ENCODE measurements at regions of chr5 and their contacts with region 1.

Region 1: DNA sequence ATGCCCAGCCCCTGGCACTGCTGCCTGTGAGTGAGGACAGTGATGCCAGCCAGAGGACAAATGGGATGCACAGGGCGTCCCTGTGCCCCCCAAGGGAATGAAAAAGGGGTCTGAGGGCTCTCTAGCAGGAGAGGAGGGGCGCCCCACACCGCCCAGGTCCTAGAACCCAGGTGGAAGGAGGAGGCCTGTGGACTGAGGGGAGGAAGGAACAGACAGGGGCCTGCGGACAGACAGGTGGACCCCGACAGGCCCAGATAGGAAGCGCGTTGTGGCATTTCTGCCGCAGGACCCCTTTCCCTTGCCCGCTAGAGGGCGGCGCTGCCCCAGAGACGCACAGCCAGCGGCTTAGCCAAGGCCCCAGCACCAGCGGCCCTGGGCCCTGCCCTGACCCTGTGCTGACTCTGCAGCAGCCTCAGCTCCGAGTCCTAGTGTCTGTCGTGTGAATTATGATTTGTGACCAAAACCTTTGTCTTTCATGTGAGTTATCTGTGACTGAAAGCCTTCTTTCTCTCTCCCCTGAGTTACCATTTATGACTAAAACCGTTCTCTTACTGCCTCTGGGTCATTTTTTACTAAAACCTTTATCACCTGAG is 30.7 kb downstream of the TRIP13 start:
- DNase-seq: peak; percentile 50 to 84 (median 68)
- ATAC-seq: peak; percentile 86
- H3K4me3 ChIP-seq: no peak overlapping the region
- H3K4me3 Mint-ChIP-seq: no peak overlapping the region
- H3K27ac ChIP-seq: no peak overlapping the region
- H3K27ac Mint-ChIP-seq: no peak overlapping the region
- H3K4me1 ChIP-seq: no peaks in the 10 kb centered on the region
- H3K4me1 Mint-ChIP-seq: peaks cover 10% of the 10 kb centered on the region
- H3K27me3 ChIP-seq: peaks cover 8 to 10% of the 10 kb centered on the region in 2 experiments
- H3K27me3 Mint-ChIP-seq: peaks cover 23% of the 10 kb centered on the region
- CTCF ChIP-seq: peak; percentile 69

Region 2: GRCh38 chr5:572398-573019 is 350.9 kb before region 1 on chr5:
- CTCF ChIA-PET with region 1: no interaction called
- POLR2A ChIA-PET with region 1: no interaction called
- intact Hi-C with region 1: no loop called
- DNase-seq: peak in 1 of 9 experiments; percentile 7
- ATAC-seq: no peak
- H3K4me3 ChIP-seq: no peak overlapping the region
- H3K4me3 Mint-ChIP-seq: no peak overlapping the region
- H3K27ac ChIP-seq: no peak overlapping the region
- H3K27ac Mint-ChIP-seq: no peak overlapping the region
- H3K4me1 ChIP-seq: no peaks in the 10 kb centered on the region
- H3K4me1 Mint-ChIP-seq: no peaks in the 10 kb centered on the region
- H3K27me3 ChIP-seq: peaks cover 0 to 3% of the 10 kb centered on the region in 2 experiments
- H3K27me3 Mint-ChIP-seq: peaks cover 30% of the 10 kb centered on the region
- CTCF ChIP-seq: no peak

Region 3: DNA sequence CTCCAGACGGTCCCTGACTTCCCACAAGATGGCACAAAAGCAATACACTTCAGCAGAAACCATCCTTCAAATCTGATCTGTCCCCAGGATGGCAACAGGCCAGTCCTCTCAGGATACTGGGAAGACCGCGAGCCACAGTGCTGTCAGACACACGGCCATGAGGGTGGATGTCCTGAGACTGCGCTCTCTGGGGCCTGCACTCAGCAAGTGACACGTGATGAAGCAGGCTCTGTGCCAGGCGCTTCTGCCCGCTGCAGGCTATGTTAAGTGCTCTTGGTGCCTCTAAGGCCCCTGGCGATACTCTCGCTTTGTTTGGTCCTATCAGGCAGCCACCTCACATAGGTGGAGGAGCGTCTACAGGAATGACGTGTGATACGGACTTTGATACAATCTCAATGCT is 37.8 kb before region 1 on chr5:
- CTCF ChIA-PET with region 1: no interaction called
- POLR2A ChIA-PET with region 1: no interaction called
- intact Hi-C with region 1: no loop called
- DNase-seq: no peak
- ATAC-seq: no peak
- H3K4me3 ChIP-seq: no peak overlapping the region
- H3K4me3 Mint-ChIP-seq: no peak overlapping the region
- H3K27ac ChIP-seq: no peak overlapping the region
- H3K27ac Mint-ChIP-seq: no peak overlapping the region
- H3K4me1 ChIP-seq: peaks cover 9% of the 10 kb centered on the region
- H3K4me1 Mint-ChIP-seq: peaks cover 30% of the 10 kb centered on the region
- H3K27me3 ChIP-seq: no peaks in the 10 kb centered on the region
- H3K27me3 Mint-ChIP-seq: no peaks in the 10 kb centered on the region
- CTCF ChIP-seq: no peak

Region 4: DNA sequence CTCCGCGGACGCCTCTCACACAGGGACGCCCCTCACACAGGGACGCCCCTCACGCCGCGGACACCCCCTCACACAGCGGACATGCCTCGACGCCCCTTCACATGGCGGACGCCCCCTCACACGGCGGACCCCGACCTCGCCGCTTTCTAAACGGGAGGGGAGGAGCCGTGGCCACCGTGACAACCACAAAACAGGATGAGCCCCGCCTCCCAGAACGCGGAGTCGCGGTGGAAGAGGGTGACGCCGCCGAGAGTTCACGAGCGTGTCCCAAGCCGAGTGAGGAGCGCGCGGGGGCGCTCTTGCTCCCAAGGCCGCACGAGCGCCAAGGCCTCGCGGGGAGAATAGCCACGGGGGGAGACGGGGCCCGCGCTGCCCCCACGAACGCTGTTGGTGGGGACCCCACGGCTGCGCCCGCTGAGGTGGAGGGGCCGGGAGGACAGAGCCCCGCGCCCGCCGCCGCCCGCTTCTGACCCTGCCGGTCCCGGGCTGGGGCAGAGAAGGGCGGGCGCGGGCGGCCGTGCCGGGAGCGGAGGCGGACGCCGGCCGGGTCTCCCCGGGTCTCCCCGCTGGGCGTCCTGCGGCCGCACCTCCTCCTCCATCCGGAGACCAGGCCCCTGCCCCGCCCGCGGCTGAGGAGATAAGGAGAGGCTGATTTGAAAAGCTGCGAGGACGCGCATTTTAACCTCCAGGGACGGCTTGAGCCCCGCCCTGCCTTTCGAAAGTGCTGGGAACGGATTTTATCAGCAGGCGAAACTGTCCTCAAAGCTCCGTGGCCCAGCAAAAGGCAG is 81.3 kb after region 1 on chr5:
- CTCF ChIA-PET with region 1: interaction called, 7 read pairs
- POLR2A ChIA-PET with region 1: no interaction called
- intact Hi-C with region 1: loop called in 1 of 2 experiments (anchors 5 kb)
- DNase-seq: peak in 8 of 9 experiments; percentile 11 to 70 (median 58)
- ATAC-seq: peak; percentile 53
- H3K4me3 ChIP-seq: peak overlapping the region; percentile 33 to 35
- H3K4me3 Mint-ChIP-seq: peak overlapping the region; percentile 71
- H3K27ac ChIP-seq: no peak overlapping the region
- H3K27ac Mint-ChIP-seq: no peak overlapping the region
- H3K4me1 ChIP-seq: peaks cover 30% of the 10 kb centered on the region
- H3K4me1 Mint-ChIP-seq: peaks cover 19% of the 10 kb centered on the region
- H3K27me3 ChIP-seq: peaks cover 8 to 25% of the 10 kb centered on the region in 2 experiments
- H3K27me3 Mint-ChIP-seq: peaks cover 19% of the 10 kb centered on the region
- CTCF ChIP-seq: no peak

Region 5: GRCh38 chr5:1011226-1011631 is 87.9 kb after region 1 on chr5:
- CTCF ChIA-PET with region 1: interaction called, 7 read pairs
- POLR2A ChIA-PET with region 1: no interaction called
- intact Hi-C with region 1: loop called (anchors 1 to 5 kb)
- DNase-seq: peak in 6 of 9 experiments; percentile 18 to 62 (median 58)
- ATAC-seq: peak; percentile 65
- H3K4me3 ChIP-seq: no peak overlapping the region
- H3K4me3 Mint-ChIP-seq: peak overlapping the region; percentile 45
- H3K27ac ChIP-seq: no peak overlapping the region
- H3K27ac Mint-ChIP-seq: no peak overlapping the region
- H3K4me1 ChIP-seq: peaks cover 8% of the 10 kb centered on the region
- H3K4me1 Mint-ChIP-seq: peaks cover 8% of the 10 kb centered on the region
- H3K27me3 ChIP-seq: peaks cover 17 to 21% of the 10 kb centered on the region in 2 experiments
- H3K27me3 Mint-ChIP-seq: peaks cover 36% of the 10 kb centered on the region
- CTCF ChIP-seq: peak; percentile 42

Region 6: DNA sequence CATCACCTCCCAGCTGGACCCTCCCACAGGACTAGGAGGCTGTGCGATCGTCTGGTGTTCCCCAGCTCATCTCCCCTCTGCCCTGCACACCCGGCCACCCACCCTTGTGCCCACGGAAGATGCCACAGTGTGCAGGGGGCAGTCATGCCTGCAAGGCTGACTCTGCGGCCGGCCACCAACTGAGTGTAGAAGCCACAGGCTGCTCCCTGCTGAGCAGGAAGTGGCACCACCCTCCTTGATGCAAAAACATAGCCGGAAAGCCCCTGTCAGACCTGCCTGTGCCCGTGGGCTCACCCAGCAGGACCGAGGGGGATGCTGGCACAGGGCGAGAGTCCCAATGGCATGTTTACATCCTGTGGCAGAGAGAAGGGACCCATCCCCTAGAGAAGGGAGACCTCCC is 228.8 kb after region 1 on chr5:
- CTCF ChIA-PET with region 1: interaction called, 10 read pairs
- POLR2A ChIA-PET with region 1: no interaction called
- intact Hi-C with region 1: no loop called
- DNase-seq: peak in 7 of 9 experiments; percentile 19 to 73 (median 59)
- ATAC-seq: peak; percentile 69
- H3K4me3 ChIP-seq: peak overlapping the region in 1 of 2 experiments; percentile 35
- H3K4me3 Mint-ChIP-seq: peak overlapping the region; percentile 45
- H3K27ac ChIP-seq: no peak overlapping the region
- H3K27ac Mint-ChIP-seq: peak overlapping the region; percentile 74
- H3K4me1 ChIP-seq: peaks cover 45% of the 10 kb centered on the region
- H3K4me1 Mint-ChIP-seq: peaks cover 35% of the 10 kb centered on the region
- H3K27me3 ChIP-seq: peaks cover 0 to 16% of the 10 kb centered on the region in 2 experiments
- H3K27me3 Mint-ChIP-seq: peaks cover 21% of the 10 kb centered on the region
- CTCF ChIP-seq: no peak

Region 7: DNA sequence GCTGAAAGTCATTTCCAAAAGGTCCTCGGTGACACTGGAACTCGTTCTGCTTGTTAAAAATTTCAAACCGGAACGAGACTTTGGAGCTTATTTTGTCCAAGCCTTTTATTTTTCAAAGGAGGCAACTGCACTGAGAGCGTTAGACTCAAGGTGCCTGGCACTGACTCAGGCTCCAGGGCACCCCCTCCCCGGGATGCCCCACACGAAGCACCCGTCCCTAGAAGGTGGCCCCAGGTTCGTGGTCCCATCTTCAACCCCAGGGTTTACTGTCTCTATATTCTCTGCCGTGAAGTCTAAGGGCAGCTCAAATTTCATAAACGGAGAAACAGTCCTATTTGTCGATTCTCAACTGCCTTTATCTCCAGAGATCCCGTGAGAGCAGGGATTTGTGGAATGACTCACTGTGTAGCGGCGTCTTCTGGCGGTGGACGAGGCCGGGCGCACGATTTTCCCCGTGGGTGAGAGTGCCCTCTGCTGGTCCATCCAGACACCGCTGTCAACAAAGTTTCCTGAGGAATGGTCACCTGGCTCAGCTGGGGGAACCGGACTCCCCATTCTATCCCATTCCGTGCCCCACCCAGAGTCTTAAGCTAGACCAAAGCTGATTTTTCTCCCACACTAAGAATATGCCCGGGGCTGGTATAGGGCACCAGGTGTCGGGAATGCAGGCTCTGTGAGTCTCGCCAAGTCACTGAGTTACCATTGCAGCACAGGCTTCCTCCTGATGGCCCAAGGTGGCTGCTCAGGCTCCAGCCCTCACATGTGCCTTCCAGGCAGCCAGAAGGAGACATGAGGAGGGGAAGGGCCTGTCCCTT is 251.0 kb after region 1 on chr5:
- CTCF ChIA-PET with region 1: interaction called, 20 read pairs
- POLR2A ChIA-PET with region 1: no interaction called
- intact Hi-C with region 1: loop called in 1 of 2 experiments (anchors 1 kb)
- DNase-seq: peak in 6 of 9 experiments; percentile 29 to 70 (median 56)
- ATAC-seq: peak; percentile 38
- H3K4me3 ChIP-seq: no peak overlapping the region
- H3K4me3 Mint-ChIP-seq: no peak overlapping the region
- H3K27ac ChIP-seq: no peak overlapping the region
- H3K27ac Mint-ChIP-seq: no peak overlapping the region
- H3K4me1 ChIP-seq: no peaks in the 10 kb centered on the region
- H3K4me1 Mint-ChIP-seq: peaks cover 9% of the 10 kb centered on the region
- H3K27me3 ChIP-seq: no peaks in the 10 kb centered on the region
- H3K27me3 Mint-ChIP-seq: no peaks in the 10 kb centered on the region
- CTCF ChIP-seq: peak; percentile 55

Measured in CD8-positive, alpha-beta T cell (primary cell).